Dorsolateral prefrontal cortex (tissue), 120 donors: ENCODE measurements at regions of chr6 and their contacts with region 1.

Region 1: DNA sequence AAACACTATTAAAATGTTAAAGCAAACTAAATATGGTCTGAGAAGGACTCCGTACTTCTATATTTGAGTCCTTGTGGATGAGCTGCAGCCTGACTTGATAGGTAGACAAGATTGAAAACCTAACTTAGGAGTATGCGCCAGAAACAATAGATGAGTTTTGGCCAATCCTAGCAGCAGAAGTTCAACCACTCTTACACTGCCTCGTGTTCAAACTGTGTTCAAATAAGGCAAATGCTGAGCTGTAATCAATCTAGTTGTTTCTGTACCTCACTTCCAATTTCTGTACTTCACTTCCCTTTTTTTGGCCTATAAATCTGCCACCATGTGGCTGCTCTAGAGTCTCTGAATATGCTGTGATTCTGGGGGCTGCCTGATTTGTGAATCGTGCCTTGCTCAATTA is 13.2 kb upstream of the SERINC1 start:
- DNase-seq: no peak
- H3K4me3 ChIP-seq: no peak overlapping the region
- H3K27ac ChIP-seq: no peak overlapping the region
- H3K27me3 ChIP-seq: no peaks in the 10 kb centered on the region
- CTCF ChIP-seq: peak in 1 of 56 donors; percentile 11

Region 2: DNA sequence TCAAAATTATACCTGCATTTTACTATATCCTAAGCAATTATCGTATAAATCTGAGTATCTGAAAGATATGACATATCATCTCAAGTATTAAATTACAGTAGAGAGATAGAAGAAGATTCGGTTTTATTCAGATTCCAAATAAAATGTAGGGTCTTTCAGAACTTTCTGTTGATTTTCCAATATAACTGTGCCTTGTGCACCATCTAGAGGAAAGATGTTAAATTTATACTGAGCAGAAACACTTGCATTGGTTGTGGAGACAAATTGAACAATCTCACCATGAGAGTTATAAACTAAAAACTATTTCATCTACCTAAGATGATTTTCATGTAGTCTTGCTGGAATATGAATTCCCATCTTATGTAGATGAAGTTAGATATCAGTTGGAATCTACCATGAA is 112.1 kb before region 1 on chr6:
- intact Hi-C with region 1: no loop called
- DNase-seq: no peak
- H3K4me3 ChIP-seq: no peak overlapping the region
- H3K27ac ChIP-seq: no peak overlapping the region
- H3K27me3 ChIP-seq: peaks cover 0 to 6% (median 0%) of the 10 kb centered on the region in 45 donors
- CTCF ChIP-seq: peak in 48 of 56 donors; percentile 10 to 65 (median 33)

Region 3: DNA sequence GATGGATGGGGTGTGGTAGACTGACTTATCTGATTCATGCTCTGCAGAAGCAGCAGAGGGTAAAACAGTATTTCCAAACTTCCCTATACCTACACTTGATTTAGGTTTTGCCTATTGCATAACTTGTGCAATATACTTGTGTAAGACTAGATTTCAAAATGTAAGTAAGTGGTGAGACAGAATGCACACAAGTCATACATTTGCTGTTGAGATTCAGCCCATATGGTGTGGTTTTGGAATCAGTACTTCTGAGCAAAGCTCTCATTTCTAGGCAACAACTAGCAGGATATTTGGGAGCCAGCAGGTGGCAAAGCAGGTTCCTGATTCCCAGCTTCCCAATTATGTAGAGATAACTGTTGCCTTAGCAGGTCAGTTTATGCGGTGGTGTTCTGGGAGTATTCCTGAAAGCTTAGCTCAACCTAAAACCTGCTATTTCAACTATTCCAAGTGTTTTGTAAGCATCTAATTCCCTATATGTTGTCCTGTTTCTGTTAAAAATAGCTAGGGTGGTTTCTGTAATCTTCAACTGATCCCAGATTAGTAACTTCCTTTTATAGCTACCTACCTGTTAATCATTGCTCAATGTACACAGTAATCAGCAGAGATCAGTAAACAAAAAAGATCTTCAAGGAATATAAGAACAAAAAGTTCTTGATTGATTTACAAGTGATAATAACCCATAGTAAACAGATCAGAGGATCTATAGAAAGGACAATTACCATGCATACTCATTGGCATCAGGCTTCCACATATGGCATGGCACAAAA is 286.3 kb after region 1 on chr6:
- intact Hi-C with region 1: loop called in 1 of 2 experiments (anchors 5 kb)
- DNase-seq: no peak
- H3K4me3 ChIP-seq: no peak overlapping the region
- H3K27ac ChIP-seq: no peak overlapping the region
- H3K27me3 ChIP-seq: no peaks in the 10 kb centered on the region
- CTCF ChIP-seq: no peak